Naive thymus-derived CD4-positive, alpha-beta T cell (primary cell): ENCODE measurements at regions of chr15 and their contacts with region 1.

Region 1: DNA sequence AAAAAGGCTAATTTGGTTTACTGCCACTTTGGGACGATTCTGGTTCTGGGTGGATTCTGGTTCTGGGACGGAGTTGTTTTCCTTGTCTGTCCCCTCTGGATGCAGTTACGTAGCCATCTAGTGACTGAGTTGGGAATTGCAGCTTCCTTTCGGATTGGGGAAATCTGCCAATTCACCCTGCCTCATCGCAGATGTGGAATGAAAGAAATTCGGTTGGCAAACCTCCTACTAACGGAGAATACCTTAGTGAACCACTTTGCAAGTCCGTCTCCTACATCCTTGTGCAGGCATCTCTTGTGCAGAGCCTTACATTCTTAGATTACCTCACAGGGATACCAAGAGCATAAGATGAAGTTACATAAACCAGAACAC is 31.5 kb upstream of the AP4E1 start:
- DNase-seq: peak; percentile 34 to 74 (median 60)
- ATAC-seq: peak; percentile 76
- H3K4me3 ChIP-seq: peak overlapping the region; percentile 37
- H3K4me3 Mint-ChIP-seq: peak overlapping the region in 9 of 10 donors; percentile 20 to 82 (median 69)
- H3K27ac ChIP-seq: no peak overlapping the region
- H3K27ac Mint-ChIP-seq: peak overlapping the region in 5 of 9 donors; percentile 43 to 79 (median 55)
- H3K4me1 ChIP-seq: peaks cover 0 to 5% of the 10 kb centered on the region in 2 donors
- H3K4me1 Mint-ChIP-seq: peaks cover 9 to 49% (median 21%) of the 10 kb centered on the region in 7 donors
- H3K27me3 ChIP-seq: no peaks in the 10 kb centered on the region
- H3K27me3 Mint-ChIP-seq: peaks cover 0 to 19% (median 6%) of the 10 kb centered on the region in 5 donors

Region 2: DNA sequence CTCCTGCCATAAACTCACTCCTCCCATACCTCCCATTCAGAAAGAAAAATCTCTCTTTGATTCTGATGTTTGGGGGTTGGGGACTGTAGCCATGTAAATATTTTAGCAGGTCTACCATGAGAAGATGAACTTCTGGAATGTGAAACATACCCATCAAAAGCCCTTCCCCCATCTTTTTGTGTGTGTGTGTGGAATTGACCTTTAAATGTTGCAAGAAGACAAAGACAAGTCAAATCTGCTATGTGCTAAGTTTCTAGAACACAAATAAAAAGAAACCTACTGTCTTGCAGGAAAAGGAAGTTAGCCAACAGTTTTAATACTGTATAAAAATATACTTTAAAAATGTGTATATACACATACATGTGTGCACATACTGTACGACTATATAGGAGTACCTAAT is 300.8 kb before region 1 on chr15:
- CTCF ChIA-PET with region 1: no interaction called
- POLR2A ChIA-PET with region 1: no interaction called
- intact Hi-C with region 1: loop called in 1 of 2 experiments (anchors 10 kb)
- DNase-seq: no peak
- ATAC-seq: no peak
- H3K4me3 ChIP-seq: no peak overlapping the region
- H3K4me3 Mint-ChIP-seq: no peak overlapping the region
- H3K27ac ChIP-seq: no peak overlapping the region
- H3K27ac Mint-ChIP-seq: peak overlapping the region in 1 of 9 donors; percentile 9
- H3K4me1 ChIP-seq: no peaks in the 10 kb centered on the region
- H3K4me1 Mint-ChIP-seq: peaks cover 0 to 2% (median 0%) of the 10 kb centered on the region in 7 donors
- H3K27me3 ChIP-seq: no peaks in the 10 kb centered on the region
- H3K27me3 Mint-ChIP-seq: no peaks in the 10 kb centered on the region

Region 3: GRCh38 chr15:50624616-50625168 is 252.3 kb before region 1 on chr15:
- CTCF ChIA-PET with region 1: no interaction called
- POLR2A ChIA-PET with region 1: no interaction called
- intact Hi-C with region 1: loop called in 1 of 2 experiments (anchors 5 kb)
- DNase-seq: no peak
- ATAC-seq: no peak
- H3K4me3 ChIP-seq: no peak overlapping the region
- H3K4me3 Mint-ChIP-seq: no peak overlapping the region
- H3K27ac ChIP-seq: no peak overlapping the region
- H3K27ac Mint-ChIP-seq: peak overlapping the region in 2 of 9 donors; percentile 10 to 73
- H3K4me1 ChIP-seq: no peaks in the 10 kb centered on the region
- H3K4me1 Mint-ChIP-seq: peaks cover 0 to 11% (median 6%) of the 10 kb centered on the region in 7 donors
- H3K27me3 ChIP-seq: no peaks in the 10 kb centered on the region
- H3K27me3 Mint-ChIP-seq: no peaks in the 10 kb centered on the region

Region 4: GRCh38 chr15:50675536-50676144 is 201.3 kb before region 1 on chr15:
- CTCF ChIA-PET with region 1: interaction called, 10 read pairs
- POLR2A ChIA-PET with region 1: no interaction called
- intact Hi-C with region 1: loop called (anchors 1 kb)
- DNase-seq: peak in 5 of 9 donors; percentile 12 to 30 (median 24)
- ATAC-seq: peak; percentile 31
- H3K4me3 ChIP-seq: no peak overlapping the region
- H3K4me3 Mint-ChIP-seq: no peak overlapping the region
- H3K27ac ChIP-seq: no peak overlapping the region
- H3K27ac Mint-ChIP-seq: peak overlapping the region in 5 of 9 donors; percentile 23 to 61 (median 45)
- H3K4me1 ChIP-seq: peaks cover 0 to 3% of the 10 kb centered on the region in 2 donors
- H3K4me1 Mint-ChIP-seq: peaks cover 9 to 45% (median 27%) of the 10 kb centered on the region in 7 donors
- H3K27me3 ChIP-seq: no peaks in the 10 kb centered on the region
- H3K27me3 Mint-ChIP-seq: no peaks in the 10 kb centered on the region